Gastrocnemius medialis (tissue), 4 donors: ENCODE measurements at regions of chr2 and their contacts with region 1.

Region 1: DNA sequence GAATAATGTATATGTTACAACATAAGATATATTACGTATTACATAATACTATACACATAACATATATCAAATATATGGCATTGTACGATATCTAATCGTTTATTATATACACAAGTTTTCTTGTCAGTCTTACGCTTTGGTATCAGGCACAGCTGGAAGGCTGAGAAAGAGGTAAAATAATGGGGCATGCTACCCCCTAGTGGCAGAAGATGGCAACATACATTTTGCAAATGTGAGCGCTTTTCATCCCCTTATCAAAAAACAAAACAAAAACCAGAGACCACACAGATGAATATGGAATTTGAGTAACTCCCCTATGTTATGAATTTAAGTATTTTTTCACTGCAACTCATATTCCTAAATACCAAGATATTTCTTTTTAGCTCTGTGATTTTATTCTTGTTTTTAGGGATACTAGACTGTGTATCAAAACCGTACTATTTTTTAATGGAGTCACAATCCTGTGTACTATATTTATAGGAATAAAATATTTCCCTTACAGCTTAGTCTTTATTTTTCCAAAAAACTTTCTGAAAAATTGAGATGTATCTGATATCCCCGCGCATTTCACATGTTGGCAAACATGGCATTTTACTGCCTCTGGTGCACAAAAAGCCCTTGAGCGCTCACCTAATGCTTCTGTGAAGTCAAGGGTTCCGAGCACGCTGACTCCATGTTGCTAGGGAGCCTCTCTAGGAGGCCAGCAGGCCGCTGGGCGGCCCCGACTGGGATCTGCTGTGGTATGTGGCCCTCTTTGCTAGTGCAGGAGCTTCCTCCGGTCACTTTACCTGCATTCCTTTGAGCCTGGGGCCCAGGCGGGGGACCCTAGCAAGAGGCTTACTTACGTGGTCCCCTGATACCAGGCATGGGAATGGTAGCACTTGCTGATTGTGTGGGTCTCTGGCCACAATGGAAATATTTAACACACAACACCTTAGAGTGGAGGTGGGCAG is 62.5 kb downstream of the SLC4A3 start:
- DNase-seq: no peak
- ATAC-seq: peak; percentile 55 to 65
- H3K4me3 ChIP-seq: no peak overlapping the region
- H3K27ac ChIP-seq: no peak overlapping the region
- H3K4me1 ChIP-seq: peaks cover 4 to 10% of the 10 kb centered on the region in 2 donors
- H3K27me3 ChIP-seq: no peaks in the 10 kb centered on the region
- CTCF ChIP-seq: peak; percentile 59 to 81 (median 70)
- POLR2A ChIP-seq: no peak

Region 2: GRCh38 chr2:219543601-219544358 is 146.2 kb before region 1 on chr2 and contains the starts of genes CHPF and TMEM198:
- in situ Hi-C with region 1: no loop called
- intact Hi-C with region 1: loop called (anchors 2 kb)
- DNase-seq: peak; percentile 96 to 98
- ATAC-seq: peak; percentile 87 to 90
- H3K4me3 ChIP-seq: peak within 1 kb of the TSS; percentile 63 to 79 (median 74)
- H3K27ac ChIP-seq: peak within 1 kb of the TSS; percentile 75 to 96 (median 88)
- H3K4me1 ChIP-seq: peaks cover 18 to 23% of the 10 kb centered on the region in 2 donors
- H3K27me3 ChIP-seq: no peaks in the 10 kb centered on the region
- CTCF ChIP-seq: no peak
- POLR2A ChIP-seq: peak; percentile 71 to 89
- total RNA-seq, gene CHPF: 21.0 to 50.5 (median 37.2) TPM
- total RNA-seq, gene TMEM198: 0.87 to 6.7 (median 3.3) TPM

Region 3: DNA sequence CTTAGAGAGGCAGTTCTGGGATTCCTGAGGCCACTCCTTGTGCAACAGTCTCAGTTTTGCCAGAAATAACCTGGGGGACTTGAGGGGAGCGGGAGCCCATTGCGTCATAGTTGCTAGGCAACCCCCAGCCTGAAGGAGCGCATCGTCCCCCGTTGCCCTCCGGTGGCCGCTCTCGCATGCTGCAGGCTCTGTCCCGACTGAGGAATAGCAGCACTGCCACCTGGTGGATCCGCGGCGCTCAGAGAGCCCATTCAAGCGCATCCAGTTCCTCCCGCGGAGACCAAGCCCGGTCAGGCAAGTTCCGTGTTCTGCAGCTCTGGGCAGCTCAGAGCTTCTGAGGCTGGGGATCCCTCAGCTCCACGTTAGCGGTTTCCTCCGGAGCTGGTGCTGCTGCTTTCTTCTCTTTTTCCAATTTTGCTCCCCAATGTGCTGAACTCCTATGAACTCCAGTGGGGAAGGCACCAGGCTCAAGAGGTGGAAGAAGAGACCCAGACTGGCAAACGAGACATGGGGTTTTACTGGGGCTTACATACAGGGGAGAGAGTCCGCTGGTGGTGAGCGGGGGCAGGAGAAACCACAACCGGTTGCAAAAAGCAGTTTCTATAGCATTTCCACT is 47.4 kb before region 1 on chr2:
- in situ Hi-C with region 1: no loop called
- intact Hi-C with region 1: loop called (anchors 1 kb)
- DNase-seq: peak; percentile 92 to 94
- ATAC-seq: peak; percentile 84 to 86
- H3K4me3 ChIP-seq: no peak overlapping the region
- H3K27ac ChIP-seq: no peak overlapping the region
- H3K4me1 ChIP-seq: peaks cover 27 to 40% of the 10 kb centered on the region in 2 donors
- H3K27me3 ChIP-seq: no peaks in the 10 kb centered on the region
- CTCF ChIP-seq: peak; percentile 96 to 100 (median 99)
- POLR2A ChIP-seq: no peak

Region 4: GRCh38 chr2:219726916-219727315 is 37.0 kb after region 1 on chr2:
- in situ Hi-C with region 1: no loop called
- intact Hi-C with region 1: loop called (anchors 5 kb)
- DNase-seq: no peak
- ATAC-seq: no peak
- H3K4me3 ChIP-seq: no peak overlapping the region
- H3K27ac ChIP-seq: no peak overlapping the region
- H3K4me1 ChIP-seq: peaks cover 5 to 19% of the 10 kb centered on the region in 2 donors
- H3K27me3 ChIP-seq: no peaks in the 10 kb centered on the region
- CTCF ChIP-seq: peak in 2 of 5 experiments; percentile 6 to 20
- POLR2A ChIP-seq: no peak

Region 5: DNA sequence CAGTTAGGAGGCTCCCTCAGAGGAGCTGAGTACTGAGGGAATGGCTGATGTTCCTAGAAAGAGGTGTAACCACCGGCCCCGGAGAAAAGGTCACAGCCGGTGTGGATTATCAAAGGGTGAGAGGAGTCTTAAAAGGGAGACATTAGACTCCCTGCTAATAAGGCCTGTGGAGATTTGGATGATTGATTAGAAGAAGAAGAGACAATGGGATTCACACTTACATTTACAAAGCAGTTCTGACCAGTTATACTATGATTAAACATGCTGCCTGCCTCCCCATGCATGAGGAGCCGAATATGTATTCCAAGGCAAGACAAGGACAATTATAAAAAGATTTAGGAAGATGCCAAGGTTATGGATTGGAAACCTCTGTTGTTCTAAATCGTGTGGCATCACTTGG is 239.9 kb after region 1 on chr2:
- in situ Hi-C with region 1: no loop called
- intact Hi-C with region 1: no loop called
- DNase-seq: no peak
- ATAC-seq: no peak
- H3K4me3 ChIP-seq: no peak overlapping the region
- H3K27ac ChIP-seq: no peak overlapping the region
- H3K4me1 ChIP-seq: no peaks in the 10 kb centered on the region
- H3K27me3 ChIP-seq: no peaks in the 10 kb centered on the region
- CTCF ChIP-seq: no peak
- POLR2A ChIP-seq: no peak